Naive thymus-derived CD4-positive, alpha-beta T cell (primary cell): ENCODE measurements at regions of chrX and their contacts with region 1.

Region 1: GRCh38 chrX:74924449-74925225 is 615 bp downstream of the NEXMIF start:
- DNase-seq: peak in 8 of 9 donors; percentile 10 to 45 (median 30)
- ATAC-seq: peak; percentile 77
- H3K4me3 ChIP-seq: peak overlapping the region; percentile 47
- H3K4me3 Mint-ChIP-seq: peak overlapping the region; percentile 80 to 97 (median 92)
- H3K27ac ChIP-seq: peak overlapping the region; percentile 53
- H3K27ac Mint-ChIP-seq: peak overlapping the region in 7 of 9 donors; percentile 59 to 96 (median 86)
- H3K4me1 ChIP-seq: no peaks in the 10 kb centered on the region
- H3K4me1 Mint-ChIP-seq: peaks cover 4 to 11% (median 7%) of the 10 kb centered on the region in 7 donors
- H3K27me3 ChIP-seq: no peaks in the 10 kb centered on the region
- H3K27me3 Mint-ChIP-seq: peaks cover 0 to 30% (median 7%) of the 10 kb centered on the region in 5 donors

Region 2: GRCh38 chrX:74534569-74535038 is 390.0 kb before region 1 on chrX:
- CTCF ChIA-PET with region 1: no interaction called
- POLR2A ChIA-PET with region 1: no interaction called
- intact Hi-C with region 1: no loop called
- DNase-seq: no peak
- ATAC-seq: peak; percentile 35
- H3K4me3 ChIP-seq: no peak overlapping the region
- H3K4me3 Mint-ChIP-seq: peak overlapping the region in 4 of 10 donors; percentile 24 to 89 (median 56)
- H3K27ac ChIP-seq: no peak overlapping the region
- H3K27ac Mint-ChIP-seq: peak overlapping the region in 5 of 9 donors; percentile 23 to 85 (median 58)
- H3K4me1 ChIP-seq: peaks cover 0 to 3% of the 10 kb centered on the region in 2 donors
- H3K4me1 Mint-ChIP-seq: peaks cover 0 to 15% (median 7%) of the 10 kb centered on the region in 7 donors
- H3K27me3 ChIP-seq: no peaks in the 10 kb centered on the region
- H3K27me3 Mint-ChIP-seq: no peaks in the 10 kb centered on the region

Region 3: DNA sequence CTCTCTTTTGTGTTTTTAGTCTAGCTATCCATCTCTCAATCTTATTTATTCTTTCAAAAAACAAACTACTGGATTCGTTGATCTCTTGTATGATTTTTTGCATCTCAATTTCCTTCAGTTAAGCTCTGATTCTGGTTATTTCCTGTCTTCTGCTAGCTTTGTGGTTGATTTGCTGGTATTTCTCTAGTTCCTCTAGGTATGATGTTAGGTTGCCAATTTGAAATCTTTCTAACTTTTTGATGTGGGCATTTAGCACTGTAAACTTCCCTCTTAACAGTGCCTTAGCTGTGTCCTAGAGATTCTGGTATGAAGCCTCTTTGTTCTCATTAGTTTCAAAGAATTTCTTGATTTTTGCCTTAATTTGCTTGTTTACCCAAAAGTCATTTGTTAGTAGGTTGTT is 15.8 kb after region 1 on chrX:
- CTCF ChIA-PET with region 1: interaction called, 3 read pairs
- POLR2A ChIA-PET with region 1: interaction called, 3 read pairs
- intact Hi-C with region 1: loop called in 1 of 2 experiments (anchors 1 kb)
- DNase-seq: peak in 5 of 9 donors; percentile 5 to 54 (median 30)
- ATAC-seq: no peak
- H3K4me3 ChIP-seq: no peak overlapping the region
- H3K4me3 Mint-ChIP-seq: peak overlapping the region in 7 of 10 donors; percentile 24 to 60 (median 42)
- H3K27ac ChIP-seq: no peak overlapping the region
- H3K27ac Mint-ChIP-seq: peak overlapping the region in 7 of 9 donors; percentile 4 to 85 (median 50)
- H3K4me1 ChIP-seq: no peaks in the 10 kb centered on the region
- H3K4me1 Mint-ChIP-seq: peaks cover 0 to 38% (median 22%) of the 10 kb centered on the region in 7 donors
- H3K27me3 ChIP-seq: no peaks in the 10 kb centered on the region
- H3K27me3 Mint-ChIP-seq: no peaks in the 10 kb centered on the region

Region 4: GRCh38 chrX:75067931-75068330 is 143.3 kb after region 1 on chrX:
- CTCF ChIA-PET with region 1: no interaction called
- POLR2A ChIA-PET with region 1: no interaction called
- intact Hi-C with region 1: loop called in 1 of 2 experiments (anchors 10 kb)
- DNase-seq: no peak
- ATAC-seq: no peak
- H3K4me3 ChIP-seq: no peak overlapping the region
- H3K4me3 Mint-ChIP-seq: no peak overlapping the region
- H3K27ac ChIP-seq: no peak overlapping the region
- H3K27ac Mint-ChIP-seq: no peak overlapping the region
- H3K4me1 ChIP-seq: no peaks in the 10 kb centered on the region
- H3K4me1 Mint-ChIP-seq: peaks cover 0 to 2% (median 0%) of the 10 kb centered on the region in 7 donors
- H3K27me3 ChIP-seq: no peaks in the 10 kb centered on the region
- H3K27me3 Mint-ChIP-seq: no peaks in the 10 kb centered on the region

Region 5: GRCh38 chrX:75156021-75156945 is 231.6 kb after region 1 on chrX and contains the start of gene ABCB7:
- CTCF ChIA-PET with region 1: no interaction called
- POLR2A ChIA-PET with region 1: interaction called, 6 read pairs
- intact Hi-C with region 1: loop called (anchors 1 to 2 kb)
- DNase-seq: peak; percentile 24 to 68 (median 59)
- ATAC-seq: peak; percentile 95
- H3K4me3 ChIP-seq: peak within 1 kb of the TSS; percentile 86
- H3K4me3 Mint-ChIP-seq: peak within 1 kb of the TSS; percentile 87 to 100 (median 95)
- H3K27ac ChIP-seq: peak within 1 kb of the TSS; percentile 75
- H3K27ac Mint-ChIP-seq: peak within 1 kb of the TSS; percentile 92 to 100 (median 96)
- H3K4me1 ChIP-seq: no peaks in the 10 kb centered on the region
- H3K4me1 Mint-ChIP-seq: peaks cover 10 to 63% (median 41%) of the 10 kb centered on the region in 7 donors
- H3K27me3 ChIP-seq: no peaks in the 10 kb centered on the region
- H3K27me3 Mint-ChIP-seq: no peaks in the 10 kb centered on the region
- total RNA-seq, gene ABCB7: 19.4 to 33.0 (median 26.3) TPM